ENCODE measurements at regions of chr12 and their contacts with region 1.

Region 1: GRCh38 chr12:53213348-53213747 is 6.3 kb upstream of the ITGB7 start:
- DNase-seq: peak; percentile 89
- H3K4me3 Mint-ChIP-seq: no peak overlapping the region
- H3K27ac Mint-ChIP-seq: peak overlapping the region; percentile 50
- H3K4me1 Mint-ChIP-seq: peaks cover 84% of the 10 kb centered on the region
- H3K27me3 Mint-ChIP-seq: no peaks in the 10 kb centered on the region

Region 2: GRCh38 chr12:53123578-53124351 is 89.6 kb before region 1 on chr12:
- CTCF ChIA-PET with region 1: no interaction called
- DNase-seq: no peak
- H3K4me3 Mint-ChIP-seq: no peak overlapping the region
- H3K27ac Mint-ChIP-seq: no peak overlapping the region
- H3K4me1 Mint-ChIP-seq: no peaks in the 10 kb centered on the region
- H3K27me3 Mint-ChIP-seq: peaks cover 17% of the 10 kb centered on the region

Region 3: GRCh38 chr12:53180220-53180930 is 33.0 kb before region 1 on chr12 and contains the starts of genes CSAD and ZNF740:
- CTCF ChIA-PET with region 1: interaction called, 31 read pairs
- DNase-seq: peak; percentile 99
- H3K4me3 Mint-ChIP-seq: peak within 1 kb of the TSS; percentile 88
- H3K27ac Mint-ChIP-seq: peak within 1 kb of the TSS; percentile 99
- H3K4me1 Mint-ChIP-seq: peaks cover 59% of the 10 kb centered on the region
- H3K27me3 Mint-ChIP-seq: no peaks in the 10 kb centered on the region

Region 4: GRCh38 chr12:53200458-53201176 is 12.7 kb before region 1 on chr12:
- CTCF ChIA-PET with region 1: interaction called, 18 read pairs
- DNase-seq: peak; percentile 55
- H3K4me3 Mint-ChIP-seq: peak overlapping the region; percentile 48
- H3K27ac Mint-ChIP-seq: peak overlapping the region; percentile 89
- H3K4me1 Mint-ChIP-seq: peaks cover 88% of the 10 kb centered on the region
- H3K27me3 Mint-ChIP-seq: no peaks in the 10 kb centered on the region

Region 5: GRCh38 chr12:53230108-53230850 is 16.9 kb after region 1 on chr12:
- CTCF ChIA-PET with region 1: interaction called, 11 read pairs
- DNase-seq: no peak
- H3K4me3 Mint-ChIP-seq: peak overlapping the region; percentile 1
- H3K27ac Mint-ChIP-seq: peak overlapping the region; percentile 56
- H3K4me1 Mint-ChIP-seq: peaks cover 48% of the 10 kb centered on the region
- H3K27me3 Mint-ChIP-seq: peaks cover 55% of the 10 kb centered on the region

Region 6: GRCh38 chr12:53287741-53288216 is 74.4 kb after region 1 on chr12:
- CTCF ChIA-PET with region 1: interaction called, 166 read pairs
- DNase-seq: peak; percentile 82
- H3K4me3 Mint-ChIP-seq: no peak overlapping the region
- H3K27ac Mint-ChIP-seq: peak overlapping the region; percentile 65
- H3K4me1 Mint-ChIP-seq: peaks cover 4% of the 10 kb centered on the region
- H3K27me3 Mint-ChIP-seq: no peaks in the 10 kb centered on the region

Region 7: GRCh38 chr12:53295070-53295890 is 81.9 kb after region 1 on chr12 and contains the start of gene PFDN5:
- CTCF ChIA-PET with region 1: interaction called, 166 read pairs
- DNase-seq: peak; percentile 92
- H3K4me3 Mint-ChIP-seq: peak within 1 kb of the TSS; percentile 100
- H3K27ac Mint-ChIP-seq: peak within 1 kb of the TSS; percentile 92
- H3K4me1 Mint-ChIP-seq: peaks cover 54% of the 10 kb centered on the region
- H3K27me3 Mint-ChIP-seq: no peaks in the 10 kb centered on the region

Region 8: GRCh38 chr12:53344824-53345485 is 131.6 kb after region 1 on chr12:
- CTCF ChIA-PET with region 1: interaction called, 18 read pairs
- DNase-seq: peak; percentile 81
- H3K4me3 Mint-ChIP-seq: peak overlapping the region; percentile 95
- H3K27ac Mint-ChIP-seq: peak overlapping the region; percentile 75
- H3K4me1 Mint-ChIP-seq: peaks cover 16% of the 10 kb centered on the region
- H3K27me3 Mint-ChIP-seq: peaks cover 42% of the 10 kb centered on the region